AG04449 (cell line): ENCODE measurements at regions of chr15 and their contacts with region 1.

Region 1: GRCh38 chr15:61051569-61052031 is 177.5 kb downstream of the RORA start:
- DNase-seq: peak; percentile 67
- H3K4me3 ChIP-seq: no peak overlapping the region
- CTCF ChIP-seq: peak; percentile 81

Region 2: DNA sequence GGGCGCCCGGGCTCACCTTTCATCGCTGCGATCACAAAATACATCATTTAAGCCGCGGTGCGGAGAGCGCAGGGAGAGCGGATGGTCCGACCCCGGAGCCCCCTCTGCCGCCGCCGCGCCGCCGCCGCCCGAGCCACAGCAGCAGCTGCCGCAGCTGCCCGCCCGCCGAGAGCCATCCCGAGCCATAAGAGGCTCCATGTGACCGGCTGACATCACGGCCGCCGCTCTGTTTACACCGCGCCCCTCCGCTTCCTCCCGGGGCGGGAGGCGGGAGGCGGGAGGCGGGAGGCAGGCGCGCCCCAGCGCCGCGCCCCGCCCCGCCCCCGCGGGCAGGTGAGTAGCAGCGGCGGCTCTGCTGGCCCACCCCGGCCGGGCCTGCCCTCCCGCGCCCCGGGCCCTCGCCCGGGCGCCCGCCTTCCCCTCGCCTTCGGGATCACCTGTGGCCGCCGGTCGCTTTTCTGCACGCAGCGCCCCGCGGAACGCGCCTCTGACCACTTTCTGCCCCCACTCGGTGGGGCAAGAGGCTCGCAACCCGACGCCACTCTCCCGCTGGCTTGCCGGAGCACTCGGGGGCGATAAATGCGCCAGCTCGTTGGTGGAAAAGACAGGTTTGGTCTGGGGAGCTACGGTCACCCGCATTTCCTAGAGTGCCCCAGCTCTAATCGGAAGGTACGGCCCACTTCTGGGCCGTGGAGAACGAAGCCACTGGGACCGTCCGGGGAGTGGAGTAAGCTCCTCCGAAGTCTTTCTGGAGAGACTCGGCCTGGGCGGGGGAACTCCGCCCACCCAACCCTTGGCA is 459.0 kb before region 1 on chr15:
- CTCF ChIA-PET with region 1: interaction called, 15 read pairs
- POLR2A ChIA-PET with region 1: no interaction called
- DNase-seq: no peak
- H3K4me3 ChIP-seq: peak overlapping the region; percentile 64
- CTCF ChIP-seq: peak; percentile 19

Region 3: GRCh38 chr15:61034678-61035291 is 16.8 kb before region 1 on chr15:
- CTCF ChIA-PET with region 1: interaction called, 16 read pairs
- POLR2A ChIA-PET with region 1: no interaction called
- DNase-seq: no peak
- H3K4me3 ChIP-seq: no peak overlapping the region
- CTCF ChIP-seq: no peak

Region 4: GRCh38 chr15:61076598-61077170 is 25.1 kb after region 1 on chr15:
- CTCF ChIA-PET with region 1: no interaction called
- POLR2A ChIA-PET with region 1: no interaction called
- DNase-seq: no peak
- H3K4me3 ChIP-seq: no peak overlapping the region
- CTCF ChIP-seq: no peak